ENCODE measurements at regions of chr1 and their contacts with region 1.

Region 1: DNA sequence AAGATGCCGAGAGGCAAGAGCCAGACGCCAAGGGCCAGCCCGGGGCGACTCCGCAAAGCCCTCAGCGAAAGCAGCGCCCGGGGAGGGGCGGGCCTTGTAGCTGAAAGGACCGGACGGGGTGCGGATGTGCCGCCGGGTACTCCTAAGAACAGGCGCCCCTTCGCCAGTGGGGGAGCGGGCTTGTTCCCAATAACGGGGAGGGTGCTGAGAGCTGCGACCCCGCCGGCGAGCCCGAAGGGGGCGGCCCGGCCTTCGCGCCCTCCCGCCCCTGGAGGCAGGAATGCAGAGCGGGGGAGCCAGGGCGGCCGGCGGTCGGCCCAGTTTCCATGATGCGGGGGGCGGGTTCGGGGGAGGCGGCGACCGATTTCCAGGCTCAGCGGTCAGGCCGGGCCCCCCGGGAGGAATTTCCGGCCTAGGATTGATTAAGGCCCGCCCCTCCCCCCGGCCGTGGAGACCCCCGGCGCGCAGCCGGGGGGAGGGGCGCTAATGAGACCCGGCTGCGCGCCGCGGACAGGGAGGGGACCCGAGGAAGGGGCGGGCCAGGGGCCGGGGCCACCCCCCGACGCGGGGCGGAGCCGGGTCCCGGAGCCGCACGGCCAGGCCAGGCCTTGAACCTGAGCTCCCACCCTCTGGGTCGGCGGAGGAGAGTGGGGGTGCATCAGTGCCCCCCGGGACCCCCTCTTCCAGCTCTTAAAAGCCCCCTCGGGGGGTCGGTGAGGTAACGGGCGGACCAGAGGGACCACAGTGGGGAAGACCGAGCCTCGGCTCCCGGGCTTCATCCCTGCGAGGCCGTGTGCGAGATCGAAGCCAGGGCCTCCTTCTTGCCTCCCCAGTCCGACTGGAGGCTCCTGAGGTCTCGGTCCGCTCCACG is 898 bp upstream of the TMEM200B start:
- DNase-seq: peak; percentile 16 to 92
- H3K4me3 ChIP-seq: peak overlapping the region; percentile 83 to 94
- H3K27ac ChIP-seq: peak overlapping the region; percentile 99
- H3K4me1 ChIP-seq: peaks cover 3 to 27% of the 10 kb centered on the region in 2 donors
- H3K27me3 ChIP-seq: no peaks in the 10 kb centered on the region
- CTCF ChIP-seq: peak; percentile 91 to 99 (median 94)

Region 2: DNA sequence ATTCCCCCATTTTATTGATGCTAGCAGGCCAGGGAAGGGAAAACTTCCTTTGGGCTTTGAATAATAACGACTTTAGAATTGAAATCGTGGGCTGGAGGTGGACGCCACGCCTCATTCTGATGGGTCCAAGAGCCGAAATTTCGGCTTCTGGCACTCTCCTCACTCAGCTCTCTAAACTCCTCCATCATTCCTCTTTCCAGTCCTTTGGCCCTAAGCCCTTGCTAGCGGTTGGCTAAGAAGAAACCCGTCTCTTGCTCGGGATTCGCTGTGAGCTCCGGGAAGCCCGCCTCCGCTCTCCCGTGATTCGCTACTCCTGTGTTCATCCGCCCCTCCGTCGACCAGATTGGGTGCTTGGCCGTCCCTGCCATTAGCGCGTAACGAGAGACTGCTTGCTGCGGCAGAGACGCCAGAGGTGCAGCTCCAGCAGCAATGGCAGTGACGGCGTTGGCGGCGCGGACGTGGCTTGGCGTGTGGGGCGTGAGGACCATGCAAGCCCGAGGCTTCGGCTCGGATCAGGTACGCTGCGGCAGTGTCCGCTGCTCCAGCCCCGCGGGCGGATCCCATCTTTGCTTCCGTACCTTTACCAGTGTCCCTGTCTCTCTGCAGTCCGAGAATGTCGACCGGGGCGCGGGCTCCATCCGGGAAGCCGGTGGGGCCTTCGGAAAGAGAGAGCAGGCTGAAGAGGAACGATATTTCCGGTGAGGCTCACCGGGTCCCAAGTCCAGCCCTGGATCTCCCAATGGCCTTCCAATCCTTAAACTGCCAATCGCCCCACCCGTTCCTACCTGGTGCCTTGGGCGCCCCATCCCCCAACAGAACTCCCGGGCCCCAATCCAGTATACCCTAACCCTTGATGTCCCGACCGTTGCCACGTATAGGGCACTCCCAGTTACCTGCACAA is 888.6 kb before region 1 on chr1 and contains the start of gene ATP5IF1:
- intact Hi-C with region 1: loop called (anchors 5 kb)
- DNase-seq: peak; percentile 95 to 99
- H3K4me3 ChIP-seq: peak within 1 kb of the TSS; percentile 80 to 86
- H3K27ac ChIP-seq: peak within 1 kb of the TSS; percentile 83 to 85
- H3K4me1 ChIP-seq: peaks cover 7 to 28% of the 10 kb centered on the region in 2 donors
- H3K27me3 ChIP-seq: no peaks in the 10 kb centered on the region
- CTCF ChIP-seq: peak in 1 of 3 experiments; percentile 8
- total RNA-seq, gene ATP5IF1: 220 TPM

Region 3: DNA sequence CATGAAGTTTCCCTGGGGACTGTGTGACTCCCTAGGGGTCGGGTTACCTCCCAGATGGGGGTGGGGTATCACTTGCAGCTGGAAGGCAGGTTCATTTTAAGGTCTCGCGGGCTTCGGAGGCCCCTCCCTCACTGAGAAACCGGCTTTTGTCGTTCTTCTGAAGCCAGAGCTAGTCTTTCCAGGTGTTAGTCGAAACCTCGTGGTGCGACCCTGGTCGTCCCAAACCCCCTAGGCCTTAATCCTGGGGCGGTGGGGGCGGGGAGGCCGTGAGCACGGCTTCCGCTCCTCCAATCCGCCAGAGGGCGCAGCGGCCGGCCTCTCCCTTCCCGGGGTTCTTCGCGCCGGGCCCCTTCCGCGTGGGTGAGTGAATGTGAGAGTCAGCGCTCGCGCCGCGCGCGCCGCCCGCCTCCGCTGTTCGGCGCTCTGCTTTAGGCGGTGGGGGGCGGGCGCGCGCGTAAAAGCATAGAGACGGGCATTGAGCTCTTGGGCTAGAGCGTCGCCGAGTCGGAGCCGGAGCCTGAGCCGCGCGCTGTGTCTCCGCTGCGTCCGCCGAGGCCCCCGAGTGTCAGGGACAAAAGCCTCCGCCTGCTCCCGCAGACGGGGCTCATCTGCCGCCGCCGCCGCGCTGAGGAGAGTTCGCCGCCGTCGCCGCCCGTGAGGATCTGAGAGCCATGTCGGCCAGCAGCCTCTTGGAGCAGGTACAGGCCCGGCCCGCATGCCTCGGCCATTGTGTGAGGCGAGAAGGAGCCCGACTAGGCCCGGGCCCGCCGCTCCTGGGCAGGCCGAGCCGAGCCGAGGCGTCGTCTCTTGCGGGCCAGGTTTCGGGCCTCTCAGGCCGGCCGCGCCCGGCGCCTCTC is 387.9 kb before region 1 on chr1 and contains the start of gene YTHDF2:
- intact Hi-C with region 1: loop called (anchors 2 kb)
- DNase-seq: peak; percentile 86 to 99
- H3K4me3 ChIP-seq: peak within 1 kb of the TSS; percentile 96 to 97
- H3K27ac ChIP-seq: peak within 1 kb of the TSS; percentile 93 to 94
- H3K4me1 ChIP-seq: peaks cover 5 to 19% of the 10 kb centered on the region in 2 donors
- H3K27me3 ChIP-seq: no peaks in the 10 kb centered on the region
- CTCF ChIP-seq: peak; percentile 93 to 95 (median 95)
- total RNA-seq, gene YTHDF2: 50.6 TPM

Region 4: GRCh38 chr1:28914228-28915030 is 210.2 kb before region 1 on chr1 and contains the start of gene EPB41:
- intact Hi-C with region 1: loop called (anchors 10 kb)
- DNase-seq: peak; percentile 58 to 94
- H3K4me3 ChIP-seq: peak within 1 kb of the TSS; percentile 53 to 84
- H3K27ac ChIP-seq: peak within 1 kb of the TSS; percentile 44 to 63
- H3K4me1 ChIP-seq: peaks cover 0 to 4% of the 10 kb centered on the region in 2 donors
- H3K27me3 ChIP-seq: no peaks in the 10 kb centered on the region
- CTCF ChIP-seq: no peak
- total RNA-seq, gene EPB41: 47.6 TPM

Region 5: DNA sequence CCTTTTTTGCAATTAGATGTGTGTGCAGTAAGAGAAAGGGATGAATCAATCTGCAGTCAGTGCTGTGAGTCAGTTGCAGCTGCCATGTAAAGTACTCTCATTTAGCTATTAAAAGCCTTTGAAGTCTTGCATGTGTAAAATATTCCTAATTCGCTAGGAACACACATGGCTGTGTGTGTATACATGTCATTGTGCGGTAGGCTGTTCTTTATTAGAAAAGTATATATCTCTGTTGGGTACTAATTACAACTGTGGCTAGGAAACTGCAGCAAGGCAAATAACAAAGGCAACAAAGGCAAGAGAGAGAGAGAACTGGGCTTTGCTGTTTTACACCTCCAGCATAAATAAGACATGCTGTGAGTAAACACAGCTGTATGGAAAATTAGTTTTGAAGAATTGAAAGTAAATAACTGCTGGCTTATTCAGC is 168.6 kb before region 1 on chr1:
- intact Hi-C with region 1: no loop called
- DNase-seq: no peak
- H3K4me3 ChIP-seq: no peak overlapping the region
- H3K27ac ChIP-seq: no peak overlapping the region
- H3K4me1 ChIP-seq: peaks cover 0 to 6% of the 10 kb centered on the region in 2 donors
- H3K27me3 ChIP-seq: no peaks in the 10 kb centered on the region
- CTCF ChIP-seq: no peak

Region 6: GRCh38 chr1:29145739-29146437 is 21.3 kb after region 1 on chr1:
- intact Hi-C with region 1: no loop called
- DNase-seq: no peak
- H3K4me3 ChIP-seq: no peak overlapping the region
- H3K27ac ChIP-seq: no peak overlapping the region
- H3K4me1 ChIP-seq: no peaks in the 10 kb centered on the region
- H3K27me3 ChIP-seq: no peaks in the 10 kb centered on the region
- CTCF ChIP-seq: no peak

Region 7: GRCh38 chr1:29181413-29182225 is 57.0 kb after region 1 on chr1 and contains the start of gene SRSF4:
- intact Hi-C with region 1: loop called (anchors 1 kb)
- DNase-seq: peak; percentile 92 to 99
- H3K4me3 ChIP-seq: peak within 1 kb of the TSS; percentile 95 to 99
- H3K27ac ChIP-seq: peak within 1 kb of the TSS; percentile 100
- H3K4me1 ChIP-seq: peaks cover 18 to 30% of the 10 kb centered on the region in 2 donors
- H3K27me3 ChIP-seq: no peaks in the 10 kb centered on the region
- CTCF ChIP-seq: peak; percentile 73 to 79 (median 75)
- total RNA-seq, gene SRSF4: 49.1 TPM

Region 8: GRCh38 chr1:29230553-29231378 is 106.2 kb after region 1 on chr1 and contains the start of gene MECR:
- intact Hi-C with region 1: loop called (anchors 1 kb)
- DNase-seq: peak; percentile 73 to 96
- H3K4me3 ChIP-seq: peak within 1 kb of the TSS; percentile 82 to 88
- H3K27ac ChIP-seq: peak within 1 kb of the TSS; percentile 73 to 83
- H3K4me1 ChIP-seq: peaks cover 0 to 10% of the 10 kb centered on the region in 2 donors
- H3K27me3 ChIP-seq: no peaks in the 10 kb centered on the region
- CTCF ChIP-seq: peak in 1 of 3 experiments; percentile 27
- total RNA-seq, gene MECR: 1.2 TPM

Region 9: DNA sequence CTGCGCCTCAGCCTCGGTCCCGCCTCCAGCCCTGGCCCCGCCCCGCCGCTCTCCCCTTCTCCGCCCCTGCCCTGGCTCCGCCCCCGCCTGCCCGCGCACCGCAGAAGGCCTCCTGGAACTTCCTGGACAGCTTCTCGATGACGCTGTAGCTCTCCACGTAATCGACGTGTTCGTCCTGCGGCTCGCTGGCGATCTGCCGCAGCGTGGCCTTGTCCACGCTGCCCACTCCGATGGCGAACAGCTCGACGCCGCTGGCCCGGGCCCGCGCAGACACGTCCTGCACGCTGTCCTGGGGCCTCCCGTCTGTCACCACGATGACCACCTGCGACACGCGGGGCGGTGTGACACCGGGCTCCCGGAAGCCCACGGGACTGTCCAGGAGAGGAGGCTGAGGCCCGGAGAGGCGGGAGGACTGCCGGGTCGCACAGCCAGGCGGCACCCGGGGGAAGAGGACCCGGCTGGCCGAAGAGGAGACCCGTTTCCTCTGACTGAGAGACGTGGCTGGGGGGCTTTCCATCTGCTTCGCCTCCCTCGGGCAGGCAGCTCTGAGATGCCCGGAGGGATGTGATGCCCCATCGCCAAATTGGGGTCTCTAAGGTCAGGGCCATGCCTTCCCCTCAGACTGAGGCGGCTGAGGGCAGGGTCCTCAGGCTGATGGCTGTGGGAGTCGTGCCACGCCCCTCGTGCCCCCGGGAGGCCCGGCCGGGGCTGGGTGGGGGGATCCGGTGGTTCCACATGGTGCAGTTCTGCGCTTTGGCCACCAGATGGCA is 1594.2 kb after region 1 on chr1:
- intact Hi-C with region 1: loop called (anchors 5 kb)
- DNase-seq: peak; percentile 32 to 99
- H3K4me3 ChIP-seq: peak overlapping the region; percentile 59 to 71
- H3K27ac ChIP-seq: peak overlapping the region; percentile 99
- H3K4me1 ChIP-seq: peaks cover 0 to 4% of the 10 kb centered on the region in 2 donors
- H3K27me3 ChIP-seq: no peaks in the 10 kb centered on the region
- CTCF ChIP-seq: peak; percentile 99 to 100 (median 99)

Measured in ascending aorta (tissue), 2 donors.